CD14-positive monocyte (primary cell): ENCODE measurements at regions of chr6 and their contacts with region 1.

Region 1: DNA sequence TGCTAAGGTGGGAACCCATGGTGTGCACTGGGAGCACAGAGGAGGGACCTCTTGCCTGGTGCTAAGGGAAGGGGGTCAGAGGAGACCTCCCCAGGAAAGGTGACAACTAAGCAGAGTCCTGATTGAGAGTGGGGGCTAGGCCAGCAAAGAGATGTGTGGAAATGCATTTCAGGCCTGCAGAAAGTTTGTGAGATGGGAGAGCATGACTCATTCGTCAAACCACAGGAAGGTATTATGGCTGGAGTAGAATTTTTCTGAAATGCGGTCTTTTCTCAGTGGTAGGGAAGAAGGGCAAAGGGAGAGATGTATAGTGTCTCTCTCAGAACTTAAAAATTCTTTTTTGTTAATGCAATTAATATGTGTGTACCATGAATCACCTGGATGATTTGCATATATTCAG is 23.6 kb upstream of the EDN1 start:
- DNase-seq: peak; percentile 57 to 90 (median 81)
- H3K4me3 ChIP-seq: peak overlapping the region in 1 of 3 experiments; percentile 34
- H3K4me3 Mint-ChIP-seq: peak overlapping the region in 1 of 2 donors; percentile 70
- H3K27ac ChIP-seq: peak overlapping the region; percentile 43 to 93
- H3K27ac Mint-ChIP-seq: peak overlapping the region; percentile 91 to 99 (median 97)
- H3K4me1 ChIP-seq: peaks cover 46 to 63% of the 10 kb centered on the region in 2 donors
- H3K4me1 Mint-ChIP-seq: peaks cover 59% of the 10 kb centered on the region
- H3K27me3 ChIP-seq: no peaks in the 10 kb centered on the region
- H3K27me3 Mint-ChIP-seq: peaks cover 0 to 4% (median 0%) of the 10 kb centered on the region in 3 donors
- CTCF ChIP-seq: no peak

Region 2: GRCh38 chr6:11732036-11732631 is 534.4 kb before region 1 on chr6:
- intact Hi-C with region 1: loop called in 1 of 2 experiments (anchors 10 kb)
- DNase-seq: peak; percentile 98 to 100 (median 99)
- H3K4me3 ChIP-seq: peak overlapping the region in 1 of 3 experiments; percentile 49
- H3K4me3 Mint-ChIP-seq: peak overlapping the region; percentile 38 to 81
- H3K27ac ChIP-seq: peak overlapping the region; percentile 67 to 88
- H3K27ac Mint-ChIP-seq: peak overlapping the region; percentile 94 to 98 (median 96)
- H3K4me1 ChIP-seq: peaks cover 46 to 49% of the 10 kb centered on the region in 2 donors
- H3K4me1 Mint-ChIP-seq: peaks cover 59% of the 10 kb centered on the region
- H3K27me3 ChIP-seq: peaks cover 3% of the 10 kb centered on the region in 2 donors
- H3K27me3 Mint-ChIP-seq: peaks cover 6 to 14% (median 13%) of the 10 kb centered on the region in 3 donors
- CTCF ChIP-seq: no peak

Region 3: DNA sequence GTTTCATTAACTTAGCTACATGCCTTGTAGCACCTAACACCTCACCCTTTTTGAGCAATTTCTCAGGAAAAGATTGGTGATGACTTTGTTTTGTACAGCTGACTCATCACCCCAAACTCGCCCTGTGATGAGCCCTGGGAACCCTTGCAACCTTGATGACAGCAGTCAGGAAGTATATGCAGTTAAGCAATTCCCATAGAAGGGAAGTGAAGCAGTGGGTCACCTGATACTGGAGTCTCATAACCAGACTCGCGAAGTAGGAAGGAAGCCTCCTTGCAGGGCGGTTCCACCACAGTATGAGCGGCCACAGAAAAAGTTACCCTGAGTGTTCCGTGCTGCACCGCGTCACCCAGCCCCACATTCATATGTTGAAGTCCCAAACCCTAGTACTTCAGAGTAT is 58.4 kb before region 1 on chr6:
- intact Hi-C with region 1: loop called in 1 of 2 experiments (anchors 5 kb)
- DNase-seq: peak; percentile 95 to 100 (median 99)
- H3K4me3 ChIP-seq: no peak overlapping the region
- H3K4me3 Mint-ChIP-seq: peak overlapping the region in 1 of 2 donors; percentile 81
- H3K27ac ChIP-seq: peak overlapping the region; percentile 49 to 79
- H3K27ac Mint-ChIP-seq: peak overlapping the region; percentile 92 to 98 (median 94)
- H3K4me1 ChIP-seq: peaks cover 13 to 14% of the 10 kb centered on the region in 2 donors
- H3K4me1 Mint-ChIP-seq: peaks cover 16% of the 10 kb centered on the region
- H3K27me3 ChIP-seq: peaks cover 0 to 2% of the 10 kb centered on the region in 2 donors
- H3K27me3 Mint-ChIP-seq: peaks cover 4 to 8% (median 8%) of the 10 kb centered on the region in 3 donors
- CTCF ChIP-seq: no peak

Region 4: GRCh38 chr6:12233693-12234571 is 32.6 kb before region 1 on chr6:
- intact Hi-C with region 1: loop called (anchors 2 to 5 kb)
- DNase-seq: peak; percentile 73 to 97 (median 85)
- H3K4me3 ChIP-seq: no peak overlapping the region
- H3K4me3 Mint-ChIP-seq: no peak overlapping the region
- H3K27ac ChIP-seq: peak overlapping the region in 1 of 2 donors; percentile 5
- H3K27ac Mint-ChIP-seq: peak overlapping the region in 6 of 7 donors; percentile 58 to 90 (median 78)
- H3K4me1 ChIP-seq: peaks cover 33 to 44% of the 10 kb centered on the region in 2 donors
- H3K4me1 Mint-ChIP-seq: peaks cover 44% of the 10 kb centered on the region
- H3K27me3 ChIP-seq: no peaks in the 10 kb centered on the region
- H3K27me3 Mint-ChIP-seq: peaks cover 0 to 3% (median 3%) of the 10 kb centered on the region in 3 donors
- CTCF ChIP-seq: peak; percentile 44

Region 5: DNA sequence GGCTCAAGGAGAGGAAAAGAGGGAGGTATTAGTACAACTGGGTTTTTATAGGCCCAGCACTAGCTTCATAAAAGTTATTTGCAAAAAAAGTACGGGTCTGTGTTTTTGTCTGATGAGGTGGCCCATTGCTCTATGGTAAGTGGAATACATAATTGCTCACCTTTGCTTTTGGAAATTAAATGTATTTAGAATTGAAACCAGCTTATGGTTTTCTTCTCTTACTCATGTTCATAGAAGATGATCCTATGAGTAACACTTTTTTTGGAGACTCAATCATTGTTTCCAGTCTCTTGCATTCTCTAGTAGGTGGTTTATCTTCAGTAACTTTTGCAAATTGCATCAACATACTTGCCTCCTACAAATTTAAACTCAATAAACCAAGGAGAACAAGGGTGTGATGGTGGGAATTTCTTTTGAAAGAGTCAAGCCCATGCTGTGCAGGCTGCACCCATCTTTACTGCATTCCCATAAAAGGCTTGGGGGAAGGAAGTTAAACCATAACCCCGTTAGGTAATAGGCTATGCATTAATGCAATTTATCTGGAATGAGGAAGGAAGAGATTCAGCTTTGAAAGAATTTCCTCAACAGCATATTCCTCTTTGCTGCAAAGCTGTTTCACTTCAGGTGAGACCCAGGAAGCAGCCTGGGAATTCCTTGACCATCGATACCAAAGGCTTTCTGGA is 24.9 kb before region 1 on chr6:
- intact Hi-C with region 1: loop called in 1 of 2 experiments (anchors 5 kb)
- DNase-seq: peak; percentile 32 to 71 (median 68)
- H3K4me3 ChIP-seq: peak overlapping the region in 1 of 3 experiments; percentile 31
- H3K4me3 Mint-ChIP-seq: peak overlapping the region in 1 of 2 donors; percentile 73
- H3K27ac ChIP-seq: no peak overlapping the region
- H3K27ac Mint-ChIP-seq: peak overlapping the region in 4 of 7 donors; percentile 57 to 71 (median 59)
- H3K4me1 ChIP-seq: peaks cover 32% of the 10 kb centered on the region in 2 donors
- H3K4me1 Mint-ChIP-seq: peaks cover 39% of the 10 kb centered on the region
- H3K27me3 ChIP-seq: no peaks in the 10 kb centered on the region
- H3K27me3 Mint-ChIP-seq: peaks cover 3 to 4% (median 4%) of the 10 kb centered on the region in 3 donors
- CTCF ChIP-seq: no peak

Region 6: DNA sequence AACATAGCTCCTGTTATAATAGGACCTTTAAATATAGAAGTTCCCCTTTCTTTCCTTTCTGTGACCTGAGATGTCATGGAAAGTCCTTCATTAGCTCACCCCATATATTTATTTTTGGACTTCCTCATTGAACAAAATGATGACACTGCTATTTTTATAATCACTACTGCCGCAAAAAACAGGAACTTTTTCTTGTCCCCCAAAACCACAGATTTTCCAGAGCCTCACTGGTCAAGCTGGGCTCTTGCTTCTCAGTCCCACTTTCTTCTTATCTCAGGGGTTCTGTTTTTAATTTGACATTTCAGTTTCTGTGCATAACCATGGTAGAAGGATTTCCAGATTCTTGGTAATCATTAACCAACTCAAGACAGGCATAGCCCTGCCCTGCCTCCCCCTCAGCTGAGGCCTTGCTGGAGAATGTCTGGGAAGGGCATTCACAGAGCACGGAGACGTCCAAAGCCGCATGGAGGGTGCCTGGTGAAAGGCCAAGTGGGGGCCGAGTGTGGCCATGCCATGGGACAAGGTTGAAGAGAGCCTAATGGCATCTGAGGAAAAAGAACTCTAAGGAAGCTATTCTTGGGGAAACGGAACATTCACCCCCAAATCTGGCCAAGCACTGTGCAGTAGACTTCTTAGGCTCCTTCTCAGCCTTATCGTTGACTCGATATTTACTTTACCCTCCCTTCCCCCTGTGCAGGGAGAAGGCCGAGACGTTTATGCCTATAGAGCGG is 97.2 kb after region 1 on chr6:
- intact Hi-C with region 1: loop called in 1 of 2 experiments (anchors 10 kb)
- DNase-seq: peak; percentile 72 to 96 (median 92)
- H3K4me3 ChIP-seq: peak overlapping the region in 1 of 3 experiments; percentile 52
- H3K4me3 Mint-ChIP-seq: peak overlapping the region in 1 of 2 donors; percentile 81
- H3K27ac ChIP-seq: peak overlapping the region; percentile 37 to 62
- H3K27ac Mint-ChIP-seq: peak overlapping the region; percentile 72 to 95 (median 85)
- H3K4me1 ChIP-seq: peaks cover 34 to 44% of the 10 kb centered on the region in 2 donors
- H3K4me1 Mint-ChIP-seq: peaks cover 17% of the 10 kb centered on the region
- H3K27me3 ChIP-seq: peaks cover 7 to 9% of the 10 kb centered on the region in 2 donors
- H3K27me3 Mint-ChIP-seq: peaks cover 5 to 25% (median 19%) of the 10 kb centered on the region in 3 donors
- CTCF ChIP-seq: no peak

Region 7: GRCh38 chr6:12545619-12546409 is 279.2 kb after region 1 on chr6:
- intact Hi-C with region 1: no loop called
- DNase-seq: no peak
- H3K4me3 ChIP-seq: no peak overlapping the region
- H3K4me3 Mint-ChIP-seq: no peak overlapping the region
- H3K27ac ChIP-seq: no peak overlapping the region
- H3K27ac Mint-ChIP-seq: no peak overlapping the region
- H3K4me1 ChIP-seq: no peaks in the 10 kb centered on the region
- H3K4me1 Mint-ChIP-seq: no peaks in the 10 kb centered on the region
- H3K27me3 ChIP-seq: no peaks in the 10 kb centered on the region
- H3K27me3 Mint-ChIP-seq: peaks cover 1 to 3% (median 2%) of the 10 kb centered on the region in 3 donors
- CTCF ChIP-seq: no peak